Panc1 (cell line): ENCODE measurements at regions of chr5 and their contacts with region 1.

Region 1: GRCh38 chr5:172458976-172459782 is 4.9 kb upstream of the SH3PXD2B start:
- DNase-seq: no peak
- ATAC-seq: no peak
- H3K4me3 ChIP-seq: no peak overlapping the region
- H3K27ac ChIP-seq: no peak overlapping the region
- H3K4me1 ChIP-seq: peaks cover 17% of the 10 kb centered on the region
- H3K27me3 ChIP-seq: no peaks in the 10 kb centered on the region
- CTCF ChIP-seq: no peak

Region 2: GRCh38 chr5:173178369-173178910 is 719.3 kb after region 1 on chr5:
- CTCF ChIA-PET with region 1: interaction called, 10 read pairs
- POLR2A ChIA-PET with region 1: no interaction called
- in situ Hi-C with region 1: no loop called
- intact Hi-C with region 1: no loop called
- DNase-seq: no peak
- ATAC-seq: no peak
- H3K4me3 ChIP-seq: no peak overlapping the region
- H3K27ac ChIP-seq: no peak overlapping the region
- H3K4me1 ChIP-seq: no peaks in the 10 kb centered on the region
- H3K27me3 ChIP-seq: no peaks in the 10 kb centered on the region
- CTCF ChIP-seq: no peak